ENCODE measurements at regions of chr15 and their contacts with region 1.

Region 1: GRCh38 chr15:40338041-40338657 is 2.6 kb downstream of the CCDC9B start:
- DNase-seq: peak; percentile 87 to 91 (median 91)
- ATAC-seq: peak; percentile 87
- H3K4me3 ChIP-seq: no peak overlapping the region
- H3K27ac ChIP-seq: no peak overlapping the region
- H3K4me1 ChIP-seq: peaks cover 22 to 63% of the 10 kb centered on the region in 2 experiments
- H3K27me3 ChIP-seq: no peaks in the 10 kb centered on the region
- CTCF ChIP-seq: peak; percentile 90 to 94 (median 93)
- EP300 ChIP-seq: no peak
- POLR2A ChIP-seq: no peak
- RAD21 ChIP-seq: peak; percentile 71 to 84

Region 2: DNA sequence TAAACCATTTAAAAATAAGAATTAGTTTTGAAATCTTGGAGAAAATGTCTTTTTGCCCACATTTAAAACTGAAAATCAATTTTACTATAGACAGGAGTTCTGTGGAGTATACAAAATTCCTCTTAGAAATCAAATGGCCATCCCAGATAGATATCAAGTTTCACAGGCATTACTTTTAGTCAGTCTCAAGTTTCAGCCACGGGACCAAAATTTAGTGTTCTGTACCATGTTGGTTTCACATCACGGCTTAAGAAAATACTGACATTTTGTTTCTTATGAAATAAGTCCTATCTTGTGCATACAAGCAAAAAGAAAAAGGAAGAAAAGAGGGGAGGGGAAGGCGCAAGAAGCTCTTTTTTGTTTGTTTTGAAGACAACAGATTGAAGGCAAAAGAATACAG is 358.5 kb before region 1 on chr15:
- CTCF ChIA-PET with region 1: no interaction called
- POLR2A ChIA-PET with region 1: no interaction called
- in situ Hi-C with region 1: no loop called
- intact Hi-C with region 1: no loop called
- DNase-seq: no peak
- ATAC-seq: no peak
- H3K4me3 ChIP-seq: no peak overlapping the region
- H3K27ac ChIP-seq: no peak overlapping the region
- H3K4me1 ChIP-seq: no peaks in the 10 kb centered on the region; a peak in 1 of 5 replicates
- H3K27me3 ChIP-seq: no peaks in the 10 kb centered on the region
- CTCF ChIP-seq: no peak
- EP300 ChIP-seq: no peak
- POLR2A ChIP-seq: no peak
- RAD21 ChIP-seq: no peak

Region 3: DNA sequence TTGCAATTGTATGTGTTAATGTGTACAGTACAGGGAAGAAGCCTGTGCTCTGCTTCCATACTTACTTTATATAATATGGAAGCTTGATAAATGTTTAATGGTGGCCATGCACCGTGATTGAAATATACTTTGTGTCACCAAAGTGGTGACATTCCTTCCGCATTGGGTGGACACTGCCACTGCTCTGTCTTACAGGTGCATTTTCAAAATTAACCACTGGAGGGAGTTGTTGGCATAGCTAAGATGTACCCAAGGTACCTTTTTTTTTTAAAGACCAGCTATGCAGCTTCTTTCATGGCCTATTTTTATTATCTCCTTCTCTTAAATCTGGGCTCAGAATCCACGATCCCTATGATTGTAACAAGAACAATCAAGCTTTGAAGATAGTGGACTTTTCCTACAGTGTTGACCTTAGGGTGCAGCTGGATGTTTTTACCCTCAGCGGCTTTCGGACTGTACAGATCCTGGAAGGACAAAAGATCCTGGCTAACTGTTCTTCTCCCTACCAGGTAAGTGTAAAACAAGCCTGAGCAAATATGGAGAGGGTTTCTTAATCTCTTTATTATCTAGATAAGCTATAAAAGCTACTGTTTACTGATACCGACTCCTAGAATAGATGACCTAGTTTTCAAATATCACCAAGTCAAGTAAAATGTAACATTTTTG is 120.9 kb before region 1 on chr15:
- CTCF ChIA-PET with region 1: interaction called, 3 read pairs
- POLR2A ChIA-PET with region 1: no interaction called
- in situ Hi-C with region 1: no loop called
- intact Hi-C with region 1: loop called (anchors 5 kb)
- DNase-seq: peak; percentile 63 to 79 (median 67)
- ATAC-seq: peak; percentile 96
- H3K4me3 ChIP-seq: no peak overlapping the region
- H3K27ac ChIP-seq: no peak overlapping the region
- H3K4me1 ChIP-seq: no peaks in the 10 kb centered on the region
- H3K27me3 ChIP-seq: no peaks in the 10 kb centered on the region
- CTCF ChIP-seq: peak; percentile 80 to 97 (median 93)
- EP300 ChIP-seq: no peak
- POLR2A ChIP-seq: no peak
- RAD21 ChIP-seq: peak; percentile 89 to 90

Region 4: DNA sequence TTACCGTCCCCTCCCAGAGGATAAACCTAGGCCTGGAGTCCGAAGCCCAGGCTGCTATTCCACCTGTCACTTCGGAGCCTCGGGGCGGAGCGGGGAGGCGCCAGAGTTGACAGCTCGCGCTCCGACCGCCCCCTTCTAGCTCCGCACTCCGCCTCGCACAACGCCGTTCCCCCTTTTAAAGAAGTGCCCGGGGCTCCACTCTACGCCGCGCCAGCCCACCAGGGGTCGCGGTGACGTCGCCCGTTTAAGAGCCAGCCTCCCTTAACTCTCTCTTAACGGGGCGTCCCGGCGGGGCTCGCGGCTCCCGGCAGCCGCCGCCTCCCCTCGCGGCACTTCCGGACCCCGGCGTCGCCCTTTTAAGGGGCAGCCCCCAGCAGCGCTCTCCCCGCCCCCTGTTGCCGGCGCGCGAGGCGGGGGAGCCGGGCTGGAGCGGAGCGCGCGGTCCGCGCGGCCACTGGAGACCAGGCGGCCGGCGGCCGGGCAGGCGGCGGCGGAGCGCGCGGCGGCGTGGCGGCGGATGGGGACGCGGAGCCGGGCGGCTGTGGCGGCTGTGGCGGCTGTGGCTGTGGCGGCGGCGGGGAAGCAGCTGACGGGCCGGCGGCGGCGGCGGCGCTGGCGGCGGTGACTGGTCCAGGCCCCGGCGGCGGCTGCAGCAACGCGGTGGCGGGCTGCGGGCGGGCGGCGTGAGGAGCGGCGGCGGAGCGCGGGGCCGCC is 14.8 kb before region 1 on chr15 and contains the start of gene INAFM2:
- CTCF ChIA-PET with region 1: interaction called, 5 read pairs
- POLR2A ChIA-PET with region 1: interaction called, 30 read pairs
- in situ Hi-C with region 1: no loop called
- intact Hi-C with region 1: loop called (anchors 1 kb)
- DNase-seq: peak; percentile 95 to 96 (median 96)
- ATAC-seq: peak; percentile 94
- H3K4me3 ChIP-seq: peak within 1 kb of the TSS; percentile 51
- H3K27ac ChIP-seq: peak within 1 kb of the TSS; percentile 75
- H3K4me1 ChIP-seq: peaks cover 31 to 34% of the 10 kb centered on the region in 2 experiments
- H3K27me3 ChIP-seq: no peaks in the 10 kb centered on the region
- CTCF ChIP-seq: peak; percentile 54 to 64 (median 57)
- EP300 ChIP-seq: no peak; the same call in 1 of the 2 replicates
- POLR2A ChIP-seq: no peak
- RAD21 ChIP-seq: peak; percentile 34 to 47; a peak in 3 of 4 replicates
- polyA plus RNA-seq, gene INAFM2: 11.8 to 12.3 TPM

Measured in K562 (cell line).